MCF 10A (cell line): ENCODE measurements at regions of chr3 and their contacts with region 1.

Region 1: GRCh38 chr3:136960836-136961518 is 3.2 kb downstream of the IL20RB start:
- DNase-seq: peak; percentile 97
- H3K4me3 Mint-ChIP-seq: peak overlapping the region; percentile 92
- H3K27ac Mint-ChIP-seq: peak overlapping the region; percentile 88
- H3K4me1 Mint-ChIP-seq: peaks cover 35% of the 10 kb centered on the region
- H3K27me3 Mint-ChIP-seq: no peaks in the 10 kb centered on the region
- CTCF ChIP-seq: no peak

Region 2: GRCh38 chr3:136621628-136622027 is 339.3 kb before region 1 on chr3:
- CTCF ChIA-PET with region 1: no interaction called
- POLR2A ChIA-PET with region 1: no interaction called
- intact Hi-C with region 1: no loop called
- DNase-seq: peak; percentile 36
- H3K4me3 Mint-ChIP-seq: no peak overlapping the region
- H3K27ac Mint-ChIP-seq: no peak overlapping the region
- H3K4me1 Mint-ChIP-seq: peaks cover 16% of the 10 kb centered on the region
- H3K27me3 Mint-ChIP-seq: no peaks in the 10 kb centered on the region
- CTCF ChIP-seq: no peak

Region 3: DNA sequence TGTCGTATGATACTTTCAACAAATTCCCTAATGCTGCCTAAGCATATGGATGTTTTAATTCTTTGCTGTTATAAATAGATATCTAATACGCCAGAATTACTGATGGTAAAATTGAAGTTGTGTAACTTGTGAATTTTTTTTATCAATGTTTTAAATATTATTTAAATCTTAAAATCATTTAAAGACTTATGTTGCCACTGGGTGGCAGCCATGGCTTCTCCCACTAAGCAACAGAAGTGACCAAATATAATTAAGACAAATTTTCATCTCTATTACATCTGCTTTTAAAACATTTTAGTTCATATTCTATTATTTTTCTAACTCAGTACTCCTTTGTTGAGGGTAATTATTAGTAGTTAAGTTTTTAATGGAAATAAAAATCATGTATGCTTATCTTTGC is 11.3 kb before region 1 on chr3:
- CTCF ChIA-PET with region 1: interaction called, 8 read pairs
- POLR2A ChIA-PET with region 1: interaction called, 38 read pairs
- intact Hi-C with region 1: no loop called
- DNase-seq: no peak
- H3K4me3 Mint-ChIP-seq: no peak overlapping the region
- H3K27ac Mint-ChIP-seq: no peak overlapping the region
- H3K4me1 Mint-ChIP-seq: peaks cover 42% of the 10 kb centered on the region
- H3K27me3 Mint-ChIP-seq: no peaks in the 10 kb centered on the region
- CTCF ChIP-seq: peak; percentile 12

Region 4: DNA sequence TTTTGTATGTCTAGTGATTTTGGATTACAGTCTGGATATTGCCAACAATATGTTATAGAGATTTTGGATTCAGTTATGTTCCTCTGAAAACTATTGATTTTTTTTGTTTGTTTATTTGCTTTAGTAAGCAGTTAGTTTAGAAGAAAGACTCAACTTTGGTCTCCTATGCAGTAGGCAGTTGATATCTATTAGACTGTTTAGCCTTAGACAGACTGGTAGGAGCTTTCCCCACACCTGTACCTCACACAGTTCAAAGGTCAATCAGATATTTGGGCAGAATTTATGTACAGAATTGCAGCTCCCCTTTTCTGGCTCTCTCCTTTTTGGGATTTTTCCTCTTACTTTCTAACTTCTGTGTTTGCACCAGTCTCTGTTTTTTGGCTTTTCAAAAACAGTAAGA is 39.1 kb after region 1 on chr3:
- CTCF ChIA-PET with region 1: interaction called, 9 read pairs
- POLR2A ChIA-PET with region 1: interaction called, 259 read pairs
- intact Hi-C with region 1: loop called (anchors 1 kb)
- DNase-seq: no peak
- H3K4me3 Mint-ChIP-seq: no peak overlapping the region
- H3K27ac Mint-ChIP-seq: peak overlapping the region; percentile 75
- H3K4me1 Mint-ChIP-seq: peaks cover 50% of the 10 kb centered on the region
- H3K27me3 Mint-ChIP-seq: no peaks in the 10 kb centered on the region
- CTCF ChIP-seq: no peak

Region 5: GRCh38 chr3:137738710-137739109 is 777.7 kb after region 1 on chr3:
- CTCF ChIA-PET with region 1: no interaction called
- POLR2A ChIA-PET with region 1: no interaction called
- intact Hi-C with region 1: no loop called
- DNase-seq: no peak
- H3K4me3 Mint-ChIP-seq: no peak overlapping the region
- H3K27ac Mint-ChIP-seq: no peak overlapping the region
- H3K4me1 Mint-ChIP-seq: no peaks in the 10 kb centered on the region
- H3K27me3 Mint-ChIP-seq: no peaks in the 10 kb centered on the region
- CTCF ChIP-seq: no peak